Activated B cell treated with CpG ODN at 0.5 μM for 24 hours (primary cell): ENCODE measurements at regions of chr11 and their contacts with region 1.

Region 1: GRCh38 chr11:86068951-86069407 is at the start of gene PICALM:
- DNase-seq: peak; percentile 94
- ATAC-seq: peak; percentile 82
- H3K4me3 Mint-ChIP-seq: peak within 1 kb of the TSS; percentile 97
- H3K27ac Mint-ChIP-seq: peak within 1 kb of the TSS; percentile 95
- H3K4me1 Mint-ChIP-seq: peaks cover 50% of the 10 kb centered on the region
- H3K27me3 Mint-ChIP-seq: no peaks in the 10 kb centered on the region
- CTCF ChIP-seq: no peak
- total RNA-seq, gene PICALM: 118 and 139 TPM in 2 replicates

Region 2: DNA sequence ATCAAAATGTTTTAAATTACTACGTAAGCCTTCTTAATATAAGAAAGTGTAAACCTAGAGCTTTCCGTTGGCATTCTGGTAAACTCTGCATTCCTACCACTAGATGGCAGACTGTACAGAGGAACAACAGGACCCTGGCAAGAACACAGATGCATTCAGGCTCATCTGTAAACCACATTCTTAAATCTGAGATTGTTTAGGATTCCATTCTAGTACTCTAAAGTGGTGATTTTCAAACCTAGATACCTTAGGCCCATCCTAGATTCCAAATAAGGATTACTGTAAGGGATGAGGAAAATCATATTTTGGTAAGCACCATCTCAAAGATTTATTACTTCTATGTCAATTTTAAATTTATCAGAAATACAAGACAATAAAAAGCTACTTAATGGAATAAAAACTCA is 27.0 kb before region 1 on chr11:
- CTCF ChIA-PET with region 1: interaction called, 28 read pairs
- POLR2A ChIA-PET with region 1: interaction called, 22 read pairs
- intact Hi-C with region 1: loop called (anchors 1 kb)
- DNase-seq: no peak
- ATAC-seq: peak; percentile 91
- H3K4me3 Mint-ChIP-seq: peak overlapping the region; percentile 6
- H3K27ac Mint-ChIP-seq: peak overlapping the region; percentile 19
- H3K4me1 Mint-ChIP-seq: peaks cover 71% of the 10 kb centered on the region
- H3K27me3 Mint-ChIP-seq: no peaks in the 10 kb centered on the region
- CTCF ChIP-seq: no peak

Region 3: GRCh38 chr11:86116386-86116726 is 47.4 kb after region 1 on chr11:
- CTCF ChIA-PET with region 1: interaction called, 5 read pairs
- POLR2A ChIA-PET with region 1: interaction called, 16 read pairs
- intact Hi-C with region 1: loop called (anchors 1 kb)
- DNase-seq: no peak
- ATAC-seq: peak; percentile 95
- H3K4me3 Mint-ChIP-seq: peak overlapping the region; percentile 46
- H3K27ac Mint-ChIP-seq: peak overlapping the region; percentile 87
- H3K4me1 Mint-ChIP-seq: peaks cover 21% of the 10 kb centered on the region
- H3K27me3 Mint-ChIP-seq: no peaks in the 10 kb centered on the region
- CTCF ChIP-seq: no peak

Region 4: GRCh38 chr11:86193297-86194095 is 124.5 kb after region 1 on chr11:
- CTCF ChIA-PET with region 1: interaction called, 35 read pairs
- POLR2A ChIA-PET with region 1: interaction called, 65 read pairs
- intact Hi-C with region 1: loop called (anchors 1 kb)
- DNase-seq: peak; percentile 48
- ATAC-seq: peak; percentile 96
- H3K4me3 Mint-ChIP-seq: peak overlapping the region; percentile 76
- H3K27ac Mint-ChIP-seq: peak overlapping the region; percentile 92
- H3K4me1 Mint-ChIP-seq: peaks cover 30% of the 10 kb centered on the region
- H3K27me3 Mint-ChIP-seq: no peaks in the 10 kb centered on the region
- CTCF ChIP-seq: peak; percentile 50

Region 5: DNA sequence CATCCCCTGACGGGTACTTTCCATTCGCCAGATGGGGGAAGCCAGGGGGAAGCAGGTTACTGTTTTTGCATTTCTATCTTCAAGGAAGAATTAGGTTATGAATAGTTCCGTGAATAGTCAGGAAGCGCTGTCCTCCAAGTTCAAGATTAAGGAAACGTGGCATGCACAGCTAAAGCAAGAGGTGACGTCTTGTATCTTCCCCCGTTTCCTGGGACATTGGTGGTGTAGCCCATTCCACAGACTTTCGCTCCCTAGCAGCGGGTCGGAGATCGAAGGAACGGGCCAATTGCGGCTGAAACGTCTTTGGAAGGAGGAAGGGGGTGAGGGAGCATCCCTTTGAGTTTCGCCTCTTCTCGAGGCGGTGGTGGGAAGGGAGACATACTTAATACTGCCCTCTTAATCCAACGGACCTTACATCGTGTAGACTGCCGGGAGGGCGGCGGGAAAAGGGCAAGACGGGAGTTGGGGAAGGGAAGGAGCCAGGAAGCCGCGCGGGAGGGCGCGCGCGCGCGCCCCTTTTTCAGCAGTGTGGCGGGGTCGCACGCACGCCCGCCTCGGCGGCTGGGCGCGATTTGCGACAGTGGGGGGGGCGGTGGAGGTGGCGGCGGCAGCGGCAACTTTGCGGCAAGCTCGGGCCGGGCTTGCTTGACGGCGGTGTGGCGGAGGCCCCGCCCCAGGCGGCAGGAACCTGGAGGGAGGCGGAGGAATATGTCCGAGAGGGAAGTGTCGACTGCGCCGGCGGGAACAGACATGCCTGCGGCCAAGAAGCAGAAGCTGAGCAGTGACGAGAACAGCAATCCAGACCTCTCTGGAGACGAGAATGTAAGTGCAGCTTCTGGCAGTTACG is 175.8 kb after region 1 on chr11 and contains the start of gene EED:
- CTCF ChIA-PET with region 1: no interaction called
- POLR2A ChIA-PET with region 1: interaction called, 48 read pairs
- intact Hi-C with region 1: loop called (anchors 1 kb)
- DNase-seq: peak; percentile 90
- ATAC-seq: peak; percentile 87
- H3K4me3 Mint-ChIP-seq: no peak within 1 kb of the TSS
- H3K27ac Mint-ChIP-seq: no peak within 1 kb of the TSS
- H3K4me1 Mint-ChIP-seq: peaks cover 31% of the 10 kb centered on the region
- H3K27me3 Mint-ChIP-seq: no peaks in the 10 kb centered on the region
- CTCF ChIP-seq: no peak
- total RNA-seq, gene EED: 55.2 and 63.7 TPM in 2 replicates